Endothelial cell of umbilical vein (primary cell): ENCODE measurements at regions of chr17 and their contacts with region 1.

Region 1: DNA sequence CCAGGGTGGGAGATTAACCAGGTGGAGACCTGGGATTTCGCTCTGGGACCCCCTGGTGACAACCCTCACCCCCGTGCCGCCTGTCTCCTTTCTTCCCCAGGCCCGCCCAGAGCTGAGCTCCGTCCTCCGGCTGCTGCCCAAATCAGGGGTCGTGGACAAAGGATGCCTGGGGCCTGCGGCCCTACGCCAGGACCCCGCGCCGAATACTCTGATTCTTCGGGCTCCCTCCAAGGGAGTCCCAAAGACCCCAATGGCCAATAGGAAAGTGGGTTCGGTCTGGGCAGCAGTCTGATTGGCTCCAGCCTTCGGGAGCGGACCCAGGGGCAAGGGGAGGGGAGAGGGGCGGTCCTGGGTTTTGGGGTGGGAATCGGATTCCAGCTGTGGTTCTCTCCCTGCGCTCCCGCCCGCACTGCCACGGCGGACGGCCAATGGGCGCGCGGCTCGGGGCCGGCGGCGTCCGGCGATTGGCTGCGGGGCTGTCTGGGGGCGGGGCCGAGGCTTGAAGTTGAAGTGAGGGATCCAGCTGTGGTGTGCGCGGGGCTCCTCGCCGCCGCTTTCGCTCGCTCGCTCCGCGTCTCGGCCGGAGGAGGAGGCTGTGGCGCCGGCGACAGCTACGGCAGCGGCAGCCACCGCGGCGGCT is at the start of gene CACNA1G:
- DNase-seq: peak; percentile 70
- H3K4me3 ChIP-seq: peak within 1 kb of the TSS in 1 of 3 experiments; percentile 15
- H3K27ac ChIP-seq: no peak within 1 kb of the TSS
- H3K4me1 ChIP-seq: peaks cover 7% of the 10 kb centered on the region
- H3K27me3 ChIP-seq: peaks cover 46 to 55% of the 10 kb centered on the region in 2 experiments
- CTCF ChIP-seq: no peak
- POLR2A ChIP-seq: no peak
- total RNA-seq, gene CACNA1G: not detected in 2 replicates

Region 2: DNA sequence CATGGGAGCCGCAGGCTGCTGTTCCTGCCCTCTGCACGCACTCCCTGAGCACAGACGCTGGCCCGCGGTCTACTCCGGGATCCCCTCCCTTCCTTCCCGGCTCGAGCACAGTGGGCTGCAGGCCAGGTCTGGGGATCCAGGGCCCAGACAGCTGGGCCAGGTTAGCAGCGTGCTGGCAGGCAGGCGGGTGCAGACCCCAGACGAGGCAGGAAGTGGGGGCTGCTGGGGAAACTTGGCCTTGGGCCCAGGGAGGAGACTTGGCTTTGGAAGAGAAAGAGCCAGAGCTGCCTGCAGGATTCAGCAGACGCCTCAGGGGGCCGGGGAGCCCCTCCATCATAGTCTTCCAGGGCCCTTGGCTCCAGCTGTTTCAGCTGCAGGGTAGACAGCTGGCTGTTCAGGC is 44.2 kb after region 1 on chr17:
- CTCF ChIA-PET with region 1: interaction called, 3 read pairs
- POLR2A ChIA-PET with region 1: no interaction called
- dilution Hi-C with region 1: no loop called
- intact Hi-C with region 1: loop called (anchors 5 kb)
- DNase-seq: peak; percentile 88
- H3K4me3 ChIP-seq: no peak overlapping the region
- H3K27ac ChIP-seq: no peak overlapping the region
- H3K4me1 ChIP-seq: peaks cover 13% of the 10 kb centered on the region
- H3K27me3 ChIP-seq: peaks cover 2 to 3% of the 10 kb centered on the region in 2 experiments
- CTCF ChIP-seq: no peak
- POLR2A ChIP-seq: no peak

Region 3: DNA sequence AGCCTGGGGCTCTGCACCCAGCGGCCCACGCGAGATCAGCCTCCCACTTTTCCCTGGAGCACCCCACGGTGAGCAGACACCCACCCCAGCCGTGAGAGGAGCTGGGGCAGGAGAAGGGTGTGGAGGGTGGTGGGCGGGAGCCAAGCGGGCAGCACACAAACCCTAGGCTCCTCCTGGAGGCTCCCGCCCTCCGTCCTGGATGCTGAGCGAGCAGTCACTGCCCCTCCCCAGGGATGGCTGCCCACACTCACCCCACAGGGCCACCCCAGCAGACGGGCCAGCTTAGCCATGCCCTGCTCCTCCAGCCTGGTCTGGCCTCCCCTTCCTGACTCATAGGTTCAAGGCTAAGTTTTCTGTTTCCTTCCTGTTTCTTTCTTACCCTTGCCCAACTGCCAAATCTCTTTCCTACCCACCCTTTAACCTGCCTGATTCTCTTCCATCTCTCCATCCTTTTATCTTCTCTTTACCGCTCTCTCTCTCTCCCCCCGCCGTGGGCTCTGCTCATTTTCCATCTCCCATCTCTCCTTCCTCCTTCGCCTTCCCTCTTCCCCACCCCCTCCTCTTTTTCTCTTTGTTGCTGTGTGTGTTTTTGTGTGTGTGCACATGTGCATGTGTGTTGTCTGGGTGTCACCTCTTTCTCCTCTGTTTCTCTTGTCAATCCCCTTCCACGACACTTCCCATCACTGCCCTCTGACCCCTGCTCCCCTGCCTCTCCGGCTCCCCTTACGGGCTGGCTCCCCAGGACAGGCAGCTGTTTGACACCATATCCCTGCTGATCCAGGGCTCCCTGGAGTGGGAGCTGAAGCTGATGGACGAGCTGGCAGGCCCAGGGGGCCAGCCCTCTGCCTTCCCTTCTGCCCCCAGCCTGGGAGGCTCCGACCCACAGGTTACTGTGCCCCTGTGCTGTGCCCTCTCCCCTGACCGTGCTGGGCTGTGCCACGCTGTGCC is 58.9 kb after region 1 on chr17:
- CTCF ChIA-PET with region 1: interaction called, 4 read pairs
- POLR2A ChIA-PET with region 1: no interaction called
- dilution Hi-C with region 1: no loop called
- intact Hi-C with region 1: loop called (anchors 5 kb)
- DNase-seq: no peak
- H3K4me3 ChIP-seq: no peak overlapping the region
- H3K27ac ChIP-seq: no peak overlapping the region
- H3K4me1 ChIP-seq: peaks cover 6% of the 10 kb centered on the region
- H3K27me3 ChIP-seq: no peaks in the 10 kb centered on the region
- CTCF ChIP-seq: no peak
- POLR2A ChIP-seq: no peak